Activated CD8-positive, alpha-beta T cell treated with anti-CD3 and anti-CD28 coated beads for 36 hours (primary cell): ENCODE measurements at regions of chr9 and their contacts with region 1.

Region 1: GRCh38 chr9:97598461-97599288 is 34.5 kb downstream of the TSTD2 start:
- DNase-seq: peak; percentile 88
- ATAC-seq: peak; percentile 98
- H3K4me3 Mint-ChIP-seq: no peak overlapping the region
- H3K27ac Mint-ChIP-seq: no peak overlapping the region
- H3K4me1 Mint-ChIP-seq: peaks cover 5% of the 10 kb centered on the region
- H3K27me3 Mint-ChIP-seq: no peaks in the 10 kb centered on the region
- CTCF ChIP-seq: peak; percentile 78

Region 2: DNA sequence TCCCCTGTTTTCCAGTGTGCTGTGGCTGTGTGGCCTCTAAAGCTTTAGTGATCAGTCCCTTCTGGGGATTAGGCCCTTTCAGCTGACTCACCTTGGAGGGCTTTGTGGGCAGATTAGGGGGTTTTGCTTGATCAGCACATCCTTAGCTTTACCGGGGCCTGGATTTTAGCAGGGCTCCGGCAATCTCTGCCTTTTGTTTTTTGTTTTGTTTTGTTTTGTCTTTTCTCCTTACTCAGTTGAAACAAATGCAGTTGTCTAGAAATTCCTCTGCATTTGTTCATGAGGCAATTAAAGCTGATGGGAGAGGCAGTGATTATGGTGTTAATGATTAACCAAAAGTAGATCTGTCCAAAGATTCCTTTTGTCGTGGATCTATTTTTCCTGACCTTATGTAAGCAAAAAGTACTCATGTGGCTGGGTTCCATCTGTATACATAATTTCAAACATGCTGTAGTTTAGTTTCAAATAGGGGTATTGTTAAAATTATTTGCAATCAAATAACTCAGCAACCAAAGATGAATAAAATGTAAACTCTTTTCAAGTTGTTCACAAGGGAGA is 192.0 kb before region 1 on chr9:
- CTCF ChIA-PET with region 1: interaction called, 39 read pairs
- POLR2A ChIA-PET with region 1: no interaction called
- intact Hi-C with region 1: loop called (anchors 5 kb)
- DNase-seq: no peak
- ATAC-seq: no peak
- H3K4me3 Mint-ChIP-seq: no peak overlapping the region
- H3K27ac Mint-ChIP-seq: no peak overlapping the region
- H3K4me1 Mint-ChIP-seq: peaks cover 5% of the 10 kb centered on the region
- H3K27me3 Mint-ChIP-seq: peaks cover 28% of the 10 kb centered on the region
- CTCF ChIP-seq: no peak

Region 3: GRCh38 chr9:97459099-97459725 is 139.5 kb before region 1 on chr9:
- CTCF ChIA-PET with region 1: interaction called, 11 read pairs
- POLR2A ChIA-PET with region 1: no interaction called
- intact Hi-C with region 1: no loop called
- DNase-seq: no peak
- ATAC-seq: no peak
- H3K4me3 Mint-ChIP-seq: no peak overlapping the region
- H3K27ac Mint-ChIP-seq: no peak overlapping the region
- H3K4me1 Mint-ChIP-seq: no peaks in the 10 kb centered on the region
- H3K27me3 Mint-ChIP-seq: no peaks in the 10 kb centered on the region
- CTCF ChIP-seq: no peak

Region 4: DNA sequence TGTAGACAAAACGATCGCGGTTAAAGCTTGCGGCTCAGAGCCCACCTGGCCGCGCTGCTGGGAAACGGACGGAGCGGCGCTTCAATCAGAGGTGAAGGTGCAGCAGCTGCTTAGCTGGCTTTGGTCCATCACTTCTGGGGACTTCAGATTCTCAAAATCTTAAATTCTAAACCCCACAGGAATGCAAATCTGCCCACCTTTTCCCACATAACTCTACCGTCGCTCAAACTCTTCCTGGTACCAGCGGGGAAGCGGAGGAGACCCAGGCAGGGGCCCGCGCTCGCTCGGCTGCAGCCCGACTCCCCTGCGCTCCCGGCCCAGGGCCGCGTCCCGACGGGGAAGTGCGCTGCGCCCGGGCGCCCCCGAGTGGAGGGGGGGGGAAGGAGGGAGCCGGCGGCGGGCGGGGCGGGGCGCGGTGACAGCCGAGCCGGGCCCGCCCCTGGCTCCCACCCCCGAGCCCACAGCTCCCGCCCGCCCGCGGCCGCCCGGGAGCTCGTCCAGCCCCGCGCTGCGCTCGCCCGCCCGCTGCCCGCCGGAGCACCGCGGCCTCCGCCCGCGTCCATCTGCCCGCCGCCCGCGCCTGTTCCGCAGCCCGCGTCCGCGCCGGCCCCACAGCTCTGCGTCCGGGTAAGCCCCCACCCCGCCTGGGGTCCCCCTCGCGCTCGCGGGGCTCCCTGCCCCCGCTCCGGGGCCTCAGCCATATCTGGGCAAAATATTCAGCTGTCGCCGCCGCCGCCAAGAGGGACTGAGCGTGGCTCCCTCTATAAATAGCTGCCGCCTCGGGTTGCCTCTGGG is 97.3 kb before region 1 on chr9 and contains the start of gene TMOD1:
- CTCF ChIA-PET with region 1: interaction called, 24 read pairs
- POLR2A ChIA-PET with region 1: interaction called, 3 read pairs
- intact Hi-C with region 1: no loop called
- DNase-seq: peak; percentile 50
- ATAC-seq: peak; percentile 86
- H3K4me3 Mint-ChIP-seq: peak within 1 kb of the TSS; percentile 62
- H3K27ac Mint-ChIP-seq: no peak within 1 kb of the TSS
- H3K4me1 Mint-ChIP-seq: peaks cover 12% of the 10 kb centered on the region
- H3K27me3 Mint-ChIP-seq: peaks cover 47% of the 10 kb centered on the region
- CTCF ChIP-seq: no peak
- total RNA-seq, gene TMOD1: 0.47 to 0.60 TPM

Region 5: DNA sequence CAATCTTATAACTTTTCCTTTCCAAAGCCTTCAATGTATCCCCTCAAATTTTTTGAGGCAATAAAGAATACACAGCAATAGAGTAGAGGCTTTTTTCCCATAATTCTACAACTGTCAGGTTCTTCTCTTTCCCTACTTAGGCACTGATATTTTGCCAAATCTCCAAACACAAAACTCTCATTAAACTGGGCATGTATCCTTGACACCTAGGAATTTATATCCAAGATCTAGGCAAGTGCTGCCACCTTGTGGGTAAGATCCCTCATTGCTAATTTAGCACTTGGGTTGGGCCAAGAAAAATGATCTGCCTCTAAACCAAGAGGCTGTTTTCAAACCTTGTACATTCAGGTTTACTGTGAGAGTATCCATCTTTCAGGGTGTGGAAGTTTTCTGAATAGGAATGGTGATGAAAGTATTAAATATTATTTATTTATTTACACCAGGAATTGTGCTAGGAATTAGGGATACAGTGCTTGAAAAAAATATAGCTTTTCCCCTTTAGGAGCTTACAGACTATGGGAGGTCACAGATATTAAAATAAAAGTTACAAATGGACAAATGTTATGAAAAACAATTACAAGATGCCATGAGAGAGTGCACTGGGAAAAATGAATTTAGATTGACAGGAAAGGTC is 16.9 kb after region 1 on chr9:
- CTCF ChIA-PET with region 1: interaction called, 63 read pairs
- POLR2A ChIA-PET with region 1: no interaction called
- intact Hi-C with region 1: no loop called
- DNase-seq: peak; percentile 72
- ATAC-seq: peak; percentile 44
- H3K4me3 Mint-ChIP-seq: no peak overlapping the region
- H3K27ac Mint-ChIP-seq: no peak overlapping the region
- H3K4me1 Mint-ChIP-seq: peaks cover 21% of the 10 kb centered on the region
- H3K27me3 Mint-ChIP-seq: no peaks in the 10 kb centered on the region
- CTCF ChIP-seq: peak; percentile 86

Region 6: DNA sequence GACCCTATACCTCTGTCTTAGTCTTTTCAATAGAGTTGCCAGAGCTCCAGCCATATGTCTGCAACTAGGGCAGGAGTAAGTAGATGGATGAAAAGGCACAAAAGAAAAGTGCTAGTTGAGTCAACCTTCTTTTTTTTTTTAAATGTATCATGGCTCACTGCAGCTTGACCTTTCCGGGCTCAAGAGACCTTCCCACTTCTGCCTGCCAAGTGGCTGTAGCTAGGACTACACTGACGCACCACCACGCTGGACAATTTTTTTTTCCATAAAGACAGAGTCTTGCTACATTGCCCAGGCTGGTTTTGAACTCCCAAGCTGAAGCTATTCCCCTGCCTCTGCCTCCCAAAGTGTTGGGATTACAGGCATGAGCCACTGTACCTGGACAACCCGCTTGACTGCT is 281.7 kb after region 1 on chr9:
- CTCF ChIA-PET with region 1: no interaction called
- POLR2A ChIA-PET with region 1: no interaction called
- intact Hi-C with region 1: no loop called
- DNase-seq: no peak
- ATAC-seq: no peak
- H3K4me3 Mint-ChIP-seq: no peak overlapping the region
- H3K27ac Mint-ChIP-seq: no peak overlapping the region
- H3K4me1 Mint-ChIP-seq: no peaks in the 10 kb centered on the region
- H3K27me3 Mint-ChIP-seq: no peaks in the 10 kb centered on the region
- CTCF ChIP-seq: no peak